ENCODE measurements at regions of chr19 and their contacts with region 1.

Region 1: GRCh38 chr19:47273313-47273977 is 1.2 kb upstream of the INAFM1 start:
- DNase-seq: peak; percentile 85
- H3K4me3 ChIP-seq: peak overlapping the region; percentile 58 to 81 (median 73)
- H3K27ac ChIP-seq: peak overlapping the region; percentile 89
- H3K4me1 ChIP-seq: peaks cover 14% of the 10 kb centered on the region
- H3K27me3 ChIP-seq: no peaks in the 10 kb centered on the region
- CTCF ChIP-seq: no peak

Region 2: GRCh38 chr19:47168065-47168464 is 105.4 kb before region 1 on chr19:
- CTCF ChIA-PET with region 1: no interaction called
- dilution Hi-C with region 1: loop called (anchors 5 kb)
- in situ Hi-C with region 1: no loop called
- intact Hi-C with region 1: no loop called
- DNase-seq: no peak
- H3K4me3 ChIP-seq: no peak overlapping the region
- H3K27ac ChIP-seq: no peak overlapping the region
- H3K4me1 ChIP-seq: no peaks in the 10 kb centered on the region
- H3K27me3 ChIP-seq: no peaks in the 10 kb centered on the region
- CTCF ChIP-seq: no peak

Region 3: GRCh38 chr19:47456721-47457478 is 183.5 kb after region 1 on chr19:
- CTCF ChIA-PET with region 1: no interaction called
- dilution Hi-C with region 1: no loop called
- in situ Hi-C with region 1: no loop called
- intact Hi-C with region 1: no loop called
- DNase-seq: no peak
- H3K4me3 ChIP-seq: peak overlapping the region in 1 of 3 experiments; percentile 4
- H3K27ac ChIP-seq: no peak overlapping the region
- H3K4me1 ChIP-seq: no peaks in the 10 kb centered on the region
- H3K27me3 ChIP-seq: peaks cover 21% of the 10 kb centered on the region
- CTCF ChIP-seq: no peak

Region 4: DNA sequence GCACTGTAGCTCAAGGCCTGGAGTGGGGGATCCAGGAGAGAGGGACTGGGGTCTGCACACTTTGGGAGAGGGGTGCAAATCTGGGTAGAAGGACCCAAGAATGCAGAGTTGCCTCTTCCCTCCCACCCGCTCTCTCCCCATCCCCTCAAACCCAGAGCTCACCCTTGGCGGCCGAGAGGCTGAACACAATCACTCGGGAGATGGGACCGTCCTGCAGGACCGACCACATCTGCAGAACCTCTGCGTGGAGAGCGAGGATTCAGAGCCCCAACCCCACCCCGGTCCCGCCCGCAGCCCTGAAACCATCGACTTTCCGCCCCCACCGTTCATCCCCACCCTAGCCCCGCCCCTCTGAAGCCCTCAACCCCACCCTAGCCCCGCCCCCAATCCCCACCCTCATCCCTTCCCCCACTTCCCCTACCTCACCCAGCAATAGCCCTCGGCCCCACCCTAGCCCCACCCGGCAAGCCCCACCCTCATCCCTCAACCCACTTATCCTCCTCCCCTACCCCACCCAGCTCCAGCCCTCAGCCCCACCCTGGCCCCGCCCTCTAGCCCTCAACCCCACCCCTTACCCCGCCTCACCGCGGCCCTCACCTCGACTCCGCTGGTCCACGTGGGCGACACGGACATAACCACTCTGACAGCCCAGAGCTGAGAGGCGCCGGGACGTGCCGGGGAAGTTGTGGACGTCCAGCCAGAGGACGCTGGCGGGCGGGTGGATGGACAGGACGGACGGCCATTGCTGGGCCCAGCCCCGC is 206.4 kb after region 1 on chr19:
- CTCF ChIA-PET with region 1: no interaction called
- dilution Hi-C with region 1: no loop called
- in situ Hi-C with region 1: no loop called
- intact Hi-C with region 1: no loop called
- DNase-seq: no peak
- H3K4me3 ChIP-seq: peak overlapping the region in 1 of 3 experiments; percentile 4
- H3K27ac ChIP-seq: no peak overlapping the region
- H3K4me1 ChIP-seq: peaks cover 3% of the 10 kb centered on the region
- H3K27me3 ChIP-seq: no peaks in the 10 kb centered on the region
- CTCF ChIP-seq: no peak

Region 5: GRCh38 chr19:47523473-47523872 is 250.0 kb after region 1 on chr19:
- CTCF ChIA-PET with region 1: no interaction called
- dilution Hi-C with region 1: no loop called
- in situ Hi-C with region 1: no loop called
- intact Hi-C with region 1: no loop called
- DNase-seq: no peak
- H3K4me3 ChIP-seq: no peak overlapping the region
- H3K27ac ChIP-seq: no peak overlapping the region
- H3K4me1 ChIP-seq: no peaks in the 10 kb centered on the region
- H3K27me3 ChIP-seq: peaks cover 6% of the 10 kb centered on the region
- CTCF ChIP-seq: no peak